Activated T-helper 1 cell treated with anti-CD3 and anti-CD28 coated beads, Interleukin-12 subunit alpha, Interleukin-12 subunit beta, Interleukin-2, Interleukin-4 antibody, amounts not matched to agents 30 ng/mL and 10 ng/mL and 1 ng/mL, durations not matched to agents 14 hours and 24 hours and 36 hours (primary cell): ENCODE measurements at regions of chr22 and their contacts with region 1.

Region 1: GRCh38 chr22:22235558-22235957 is 9.0 kb upstream of the VPREB1 start:
- DNase-seq: peak; percentile 29
- H3K4me3 Mint-ChIP-seq: no peak overlapping the region
- H3K27ac Mint-ChIP-seq: no peak overlapping the region
- H3K4me1 Mint-ChIP-seq: peaks cover 15% of the 10 kb centered on the region
- H3K27me3 Mint-ChIP-seq: peaks cover 2% of the 10 kb centered on the region

Region 2: DNA sequence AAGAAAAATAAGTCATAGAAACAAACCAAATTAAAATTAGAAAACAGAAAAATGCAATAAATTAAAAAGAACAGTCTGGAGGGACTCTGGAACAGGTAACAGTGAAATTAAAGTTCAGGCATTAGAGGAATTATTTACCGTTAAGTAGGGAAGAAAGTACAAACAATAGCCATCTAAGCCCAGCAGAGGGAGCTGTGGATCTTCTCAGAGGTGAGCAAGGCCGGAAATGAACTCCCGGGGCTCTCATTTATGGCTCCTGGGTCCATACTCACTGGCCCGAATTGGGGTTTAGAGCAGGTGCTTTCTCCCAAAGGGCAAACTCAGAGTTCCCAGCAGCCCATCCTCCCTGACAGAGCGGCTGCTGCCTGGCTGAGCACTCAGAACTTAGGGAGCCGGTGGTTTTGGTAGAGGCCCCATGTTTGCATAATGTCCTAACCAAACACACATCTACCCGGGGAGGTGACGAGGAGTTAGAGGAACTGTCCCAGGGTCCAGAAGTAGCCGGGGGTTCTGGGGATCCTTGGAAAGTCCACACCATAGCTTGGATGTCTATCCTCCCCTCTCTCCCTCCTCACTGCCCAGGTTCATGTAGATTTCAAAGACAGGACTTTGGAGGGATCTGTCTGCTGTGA is 78.7 kb before region 1 on chr22:
- intact Hi-C with region 1: loop called (anchors 1 kb)
- DNase-seq: peak; percentile 48
- H3K4me3 Mint-ChIP-seq: no peak overlapping the region
- H3K27ac Mint-ChIP-seq: peak overlapping the region; percentile 51
- H3K4me1 Mint-ChIP-seq: peaks cover 4% of the 10 kb centered on the region
- H3K27me3 Mint-ChIP-seq: peaks cover 16% of the 10 kb centered on the region

Region 3: GRCh38 chr22:22195265-22196017 is 40.1 kb before region 1 on chr22:
- intact Hi-C with region 1: loop called (anchors 1 kb)
- DNase-seq: peak; percentile 64
- H3K4me3 Mint-ChIP-seq: no peak overlapping the region
- H3K27ac Mint-ChIP-seq: no peak overlapping the region
- H3K4me1 Mint-ChIP-seq: no peaks in the 10 kb centered on the region
- H3K27me3 Mint-ChIP-seq: peaks cover 27% of the 10 kb centered on the region

Region 4: DNA sequence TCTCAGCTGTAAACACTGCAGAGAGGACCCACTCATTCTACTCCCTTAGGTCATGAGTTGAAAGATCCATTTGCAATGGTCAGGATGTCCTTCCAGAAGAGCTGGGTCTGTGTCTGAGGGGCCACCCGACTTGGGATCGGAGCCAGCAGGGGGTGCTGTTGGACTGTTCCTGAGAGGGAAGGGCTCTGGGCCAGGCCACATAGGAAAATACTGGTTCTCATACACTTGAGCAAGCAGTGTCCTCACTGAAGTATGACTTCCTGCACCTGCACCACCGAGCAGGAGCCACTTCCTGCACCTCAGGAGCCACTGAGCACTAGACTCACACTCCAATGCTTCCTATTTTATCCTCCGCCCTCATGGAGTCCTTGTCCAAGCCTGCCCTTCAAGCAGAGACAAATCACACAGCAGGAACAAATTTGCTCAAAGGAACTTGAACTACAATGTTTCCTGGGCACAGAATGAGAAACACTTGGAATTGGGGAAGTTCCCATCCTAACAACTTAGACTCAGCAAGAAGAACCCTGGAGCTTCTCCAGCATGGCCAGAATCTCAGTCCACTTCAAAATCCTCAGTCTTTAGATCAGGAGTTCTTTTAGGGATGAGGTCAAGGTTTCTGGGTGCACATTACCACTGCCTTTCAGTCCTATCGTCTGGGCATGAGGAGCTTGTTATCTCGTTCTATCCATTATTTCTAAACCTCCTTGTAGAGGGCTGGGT is 27.6 kb before region 1 on chr22:
- intact Hi-C with region 1: loop called (anchors 1 kb)
- DNase-seq: peak; percentile 75
- H3K4me3 Mint-ChIP-seq: no peak overlapping the region
- H3K27ac Mint-ChIP-seq: peak overlapping the region; percentile 84
- H3K4me1 Mint-ChIP-seq: peaks cover 41% of the 10 kb centered on the region
- H3K27me3 Mint-ChIP-seq: peaks cover 4% of the 10 kb centered on the region